ENCODE measurements at regions of chr6 and their contacts with region 1.

Region 1: DNA sequence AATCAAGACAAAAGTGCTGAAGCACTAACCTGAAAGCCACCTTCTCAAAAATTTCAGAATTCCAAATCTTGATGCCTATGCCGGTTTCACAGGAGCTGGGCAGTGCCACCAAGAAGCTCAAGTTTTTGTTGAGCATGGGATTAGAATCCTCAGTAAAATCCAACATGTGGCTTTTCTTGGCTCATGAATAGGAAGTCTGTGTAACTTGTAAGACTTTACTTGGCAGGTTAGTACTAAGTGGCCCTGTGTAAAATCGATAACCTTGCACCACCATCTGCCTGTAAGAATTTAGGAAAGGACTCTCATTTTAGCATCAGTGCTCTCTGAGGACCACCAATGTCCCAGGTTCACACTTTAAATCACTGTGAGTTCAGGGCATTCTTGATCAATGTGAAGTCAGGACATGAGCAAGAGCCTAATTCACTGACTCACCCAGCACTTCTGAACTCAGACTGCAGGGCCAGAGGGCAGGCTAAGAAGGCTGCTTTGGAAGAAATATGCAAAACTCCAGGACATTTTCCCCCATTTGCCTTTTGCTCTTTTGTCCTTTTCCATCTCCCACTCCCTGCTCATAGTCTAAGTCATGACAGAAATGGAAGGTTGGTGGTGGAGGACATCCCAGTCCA is 113.2 kb downstream of the EDN1 start:
- DNase-seq: no peak
- ATAC-seq: peak in 3 of 4 donors; percentile 30 to 78 (median 56)
- H3K4me3 ChIP-seq: no peak overlapping the region
- H3K27ac ChIP-seq: peak overlapping the region in 2 of 12 donors; percentile 32 to 47
- H3K4me1 ChIP-seq: peaks cover 0 to 33% (median 6%) of the 10 kb centered on the region in 12 donors
- H3K27me3 ChIP-seq: no peaks in the 10 kb centered on the region
- CTCF ChIP-seq: no peak
- POLR2A ChIP-seq: no peak

Region 2: DNA sequence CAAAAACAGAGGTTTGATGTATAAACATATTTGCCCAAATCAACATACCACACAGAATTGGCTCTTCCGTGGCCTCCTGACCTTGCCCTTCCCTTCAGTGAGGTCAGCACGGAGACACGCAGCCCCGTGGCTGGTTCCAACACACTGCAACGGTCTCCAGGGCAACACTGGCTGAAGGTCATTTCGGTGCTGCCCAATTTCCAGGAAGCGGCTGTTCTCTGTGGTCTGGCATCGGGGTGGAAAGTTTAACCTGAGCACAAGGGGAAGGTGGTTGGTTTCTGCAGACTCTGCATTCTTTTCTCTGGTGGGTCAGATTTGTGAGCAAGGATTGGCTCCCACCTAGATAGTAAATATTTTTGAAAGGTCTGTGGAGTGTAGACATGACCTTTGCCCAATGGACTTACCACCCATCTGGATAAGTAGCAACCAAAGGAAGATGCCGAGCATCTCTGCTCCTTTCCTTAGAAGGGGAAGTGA is 135.6 kb after region 1 on chr6:
- intact Hi-C with region 1: no loop called
- DNase-seq: peak in 4 of 5 donors; percentile 28 to 75 (median 37)
- ATAC-seq: peak in 3 of 4 donors; percentile 79 to 96 (median 80)
- H3K4me3 ChIP-seq: no peak overlapping the region
- H3K27ac ChIP-seq: peak overlapping the region in 1 of 12 donors; percentile 36
- H3K4me1 ChIP-seq: peaks cover 0 to 19% (median 2%) of the 10 kb centered on the region in 12 donors
- H3K27me3 ChIP-seq: peaks cover 0 to 4% (median 0%) of the 10 kb centered on the region in 9 donors
- CTCF ChIP-seq: no peak
- POLR2A ChIP-seq: no peak

Region 3: GRCh38 chr6:12585497-12586041 is 182.3 kb after region 1 on chr6:
- intact Hi-C with region 1: loop called in 2 of 10 experiments (anchors 10 kb)
- DNase-seq: peak in 4 of 5 donors; percentile 43 to 60 (median 52)
- ATAC-seq: peak; percentile 62 to 88 (median 72)
- H3K4me3 ChIP-seq: peak overlapping the region in 7 of 12 donors; percentile 3 to 35 (median 10)
- H3K27ac ChIP-seq: peak overlapping the region in 11 of 12 donors; percentile 26 to 90 (median 62)
- H3K4me1 ChIP-seq: peaks cover 0 to 15% (median 4%) of the 10 kb centered on the region in 12 donors
- H3K27me3 ChIP-seq: no peaks in the 10 kb centered on the region
- CTCF ChIP-seq: no peak
- POLR2A ChIP-seq: no peak

Region 4: GRCh38 chr6:12595161-12595811 is 192.0 kb after region 1 on chr6:
- intact Hi-C with region 1: loop called in 7 of 10 experiments (anchors 5 to 10 kb)
- DNase-seq: no peak
- ATAC-seq: peak in 1 of 4 donors; percentile 61
- H3K4me3 ChIP-seq: peak overlapping the region in 1 of 12 donors; percentile 4
- H3K27ac ChIP-seq: peak overlapping the region in 1 of 12 donors; percentile 45
- H3K4me1 ChIP-seq: peaks cover 0 to 26% (median 0%) of the 10 kb centered on the region in 12 donors
- H3K27me3 ChIP-seq: no peaks in the 10 kb centered on the region
- CTCF ChIP-seq: no peak
- POLR2A ChIP-seq: no peak